Heart left ventricle (tissue), 16 donors: ENCODE measurements at regions of chr1 and their contacts with region 1.

Region 1: GRCh38 chr1:213457097-213457680 is 406.1 kb downstream of the RPS6KC1 start:
- DNase-seq: peak in 4 of 5 donors; percentile 33 to 48 (median 46)
- ATAC-seq: peak; percentile 69 to 88 (median 84)
- H3K4me3 ChIP-seq: no peak overlapping the region
- H3K27ac ChIP-seq: no peak overlapping the region
- H3K4me1 ChIP-seq: peaks cover 0 to 13% (median 5%) of the 10 kb centered on the region in 12 donors
- H3K27me3 ChIP-seq: no peaks in the 10 kb centered on the region
- CTCF ChIP-seq: no peak
- POLR2A ChIP-seq: no peak

Region 2: GRCh38 chr1:213399695-213400094 is 57.5 kb before region 1 on chr1:
- intact Hi-C with region 1: loop called in 1 of 10 experiments (anchors 5 kb)
- DNase-seq: peak in 4 of 5 donors; percentile 34 to 41 (median 37)
- ATAC-seq: peak; percentile 84 to 96 (median 92)
- H3K4me3 ChIP-seq: peak overlapping the region in 1 of 12 donors; percentile 13
- H3K27ac ChIP-seq: peak overlapping the region in 10 of 12 donors; percentile 11 to 92 (median 69)
- H3K4me1 ChIP-seq: peaks cover 0 to 16% (median 0%) of the 10 kb centered on the region in 12 donors
- H3K27me3 ChIP-seq: no peaks in the 10 kb centered on the region
- CTCF ChIP-seq: no peak
- POLR2A ChIP-seq: no peak